Astrocyte of the cerebellum (primary cell): ENCODE measurements at regions of chr14 and their contacts with region 1.

Region 1: DNA sequence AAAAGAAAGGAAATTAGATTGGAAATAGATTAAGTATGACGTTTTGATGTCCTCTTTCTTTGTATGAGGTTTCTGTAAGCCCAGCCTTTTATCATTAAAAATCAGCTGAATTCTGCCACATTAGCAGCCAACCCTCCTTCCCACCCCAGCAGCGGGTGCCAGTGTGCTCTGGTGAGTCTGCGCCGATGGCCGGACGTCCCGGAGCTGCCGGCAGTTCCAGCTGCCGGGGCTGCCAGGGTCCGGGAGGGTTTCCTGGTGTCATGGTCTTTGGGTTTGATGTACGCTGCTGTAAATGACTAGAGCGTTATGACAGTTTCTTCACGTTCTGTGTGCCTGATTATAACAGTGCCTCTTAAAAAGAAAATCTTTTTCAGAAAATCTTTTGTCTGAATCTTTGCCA is 51.5 kb upstream of the DYNC1H1 start:
- DNase-seq: no peak
- H3K4me3 ChIP-seq: no peak overlapping the region
- CTCF ChIP-seq: no peak

Region 2: DNA sequence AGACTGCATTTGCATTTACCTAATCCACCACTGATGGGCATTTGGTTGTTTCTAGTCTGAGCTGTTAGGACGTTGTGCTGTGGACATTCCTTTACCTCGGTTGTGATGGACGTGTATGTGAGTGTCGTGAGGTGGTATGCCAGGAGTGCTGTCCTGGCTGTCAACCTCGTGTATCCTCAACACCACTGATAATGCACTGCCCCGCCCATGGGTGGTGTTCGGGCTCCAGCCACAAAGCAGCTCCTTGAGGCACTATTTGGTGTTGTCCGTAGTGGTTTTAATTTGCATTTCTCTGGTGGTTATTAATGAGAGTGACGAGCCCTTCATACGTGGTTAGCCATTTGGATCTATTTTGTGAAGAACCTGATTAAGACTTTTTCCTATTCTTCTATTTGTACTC is 63.7 kb before region 1 on chr14:
- in situ Hi-C with region 1: loop called (anchors 5 kb)
- DNase-seq: no peak
- H3K4me3 ChIP-seq: no peak overlapping the region
- CTCF ChIP-seq: no peak